SK-N-SH (cell line): ENCODE measurements at regions of chr5 and their contacts with region 1.

Region 1: DNA sequence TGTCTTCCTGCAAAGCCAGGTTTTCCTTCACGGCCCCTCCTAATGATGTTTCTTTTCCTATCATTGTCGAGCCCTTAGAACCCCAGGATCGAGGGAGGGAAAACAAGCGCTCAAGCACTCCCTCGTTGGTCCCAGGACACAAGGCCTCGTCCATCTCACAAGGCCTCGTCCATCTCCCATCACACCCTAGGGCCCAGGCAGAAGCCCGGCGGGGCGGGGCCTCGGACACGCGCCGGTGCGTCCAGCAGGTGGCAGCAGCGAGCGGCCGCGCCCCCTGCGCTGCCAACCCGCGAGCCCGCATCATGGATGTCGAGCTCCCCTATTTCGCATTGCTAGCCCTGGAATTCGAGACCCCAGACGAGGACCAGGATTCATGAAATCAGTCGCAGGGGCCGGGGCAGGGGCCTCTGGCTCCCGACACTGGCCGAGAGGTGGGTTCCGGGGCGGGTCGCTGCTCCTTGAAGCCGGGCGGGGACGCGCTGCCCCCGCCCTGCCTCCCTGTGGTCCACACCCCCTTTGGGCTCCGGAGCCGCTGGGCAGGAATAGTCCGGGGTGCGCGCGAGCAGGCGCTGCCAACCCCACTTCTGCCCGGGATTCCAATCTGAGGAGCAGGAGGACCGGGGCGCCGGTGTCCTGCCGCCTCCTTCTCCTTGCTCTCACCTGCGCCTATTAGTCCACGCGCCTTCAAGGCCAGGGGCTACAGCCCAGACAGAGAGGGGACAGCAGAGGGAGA is at the start of gene ABLIM3:
- DNase-seq: peak; percentile 94
- H3K4me3 ChIP-seq: peak within 1 kb of the TSS; percentile 69 to 87
- H3K27ac ChIP-seq: peak within 1 kb of the TSS in 1 of 2 experiments; percentile 40; a peak in 2 of 4 replicates
- H3K4me1 ChIP-seq: peaks cover 2 to 13% of the 10 kb centered on the region in 2 experiments; a peak in 3 of 4 replicates
- H3K27me3 ChIP-seq: no peaks in the 10 kb centered on the region
- CTCF ChIP-seq: peak; percentile 85
- EP300 ChIP-seq: no peak
- RAD21 ChIP-seq: peak; percentile 55
- polyA plus RNA-seq, gene ABLIM3: 5.2 and 5.9 TPM in 2 replicates

Region 2: DNA sequence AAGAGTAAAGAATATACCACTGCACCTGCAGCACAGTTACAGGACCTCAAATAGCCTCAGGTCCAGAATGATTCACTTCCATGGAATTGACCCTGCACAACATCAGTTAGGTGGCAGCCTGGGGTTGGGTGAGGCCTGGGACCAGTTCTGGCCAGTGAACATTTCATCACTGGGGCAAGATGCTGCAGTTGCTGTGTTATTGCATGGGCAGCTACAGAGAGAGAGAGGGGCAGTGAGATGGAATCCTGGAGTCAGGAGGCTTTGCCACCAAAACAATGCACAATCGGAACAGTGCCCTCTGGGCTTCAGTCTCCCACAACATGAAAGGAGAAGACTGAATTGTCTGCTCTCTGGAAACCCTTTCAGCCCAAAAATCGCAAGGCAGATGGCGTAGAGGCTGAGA is 130.3 kb before region 1 on chr5:
- CTCF ChIA-PET with region 1: no interaction called
- POLR2A ChIA-PET with region 1: no interaction called
- DNase-seq: no peak
- H3K4me3 ChIP-seq: no peak overlapping the region
- H3K27ac ChIP-seq: no peak overlapping the region
- H3K4me1 ChIP-seq: peaks cover 0 to 2% of the 10 kb centered on the region in 2 experiments; a peak in 2 of 4 replicates
- H3K27me3 ChIP-seq: no peaks in the 10 kb centered on the region
- CTCF ChIP-seq: no peak
- EP300 ChIP-seq: no peak
- RAD21 ChIP-seq: no peak

Region 3: DNA sequence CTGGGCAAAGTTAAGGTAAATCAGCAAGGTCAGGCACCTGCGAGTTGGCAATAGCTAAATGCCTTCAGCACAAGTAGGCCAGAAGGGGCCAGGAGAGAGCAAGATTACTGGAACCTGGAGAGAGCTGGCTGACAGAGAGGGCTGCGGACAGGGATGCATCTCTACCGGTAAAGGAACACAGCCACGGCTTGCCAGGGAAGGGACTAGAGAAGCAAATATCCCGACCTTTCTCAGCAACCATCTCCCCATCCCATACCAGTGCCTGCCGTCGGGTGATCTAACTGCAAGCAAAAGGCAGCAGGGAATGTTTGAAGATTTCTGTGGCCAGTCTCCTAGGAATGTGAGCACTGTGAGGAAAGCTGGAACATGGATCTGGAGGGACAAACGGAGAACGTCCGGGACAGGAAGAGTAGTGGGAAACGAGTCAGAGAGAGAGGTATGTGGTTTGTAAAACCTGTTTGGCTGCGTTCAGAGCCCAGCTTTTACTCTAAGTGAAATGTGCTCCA is 16.0 kb before region 1 on chr5:
- CTCF ChIA-PET with region 1: interaction called, 26 read pairs
- POLR2A ChIA-PET with region 1: no interaction called
- DNase-seq: no peak
- H3K4me3 ChIP-seq: no peak overlapping the region
- H3K27ac ChIP-seq: no peak overlapping the region
- H3K4me1 ChIP-seq: no peaks in the 10 kb centered on the region
- H3K27me3 ChIP-seq: no peaks in the 10 kb centered on the region
- CTCF ChIP-seq: peak; percentile 36; the same call in 1 of the 2 replicates
- EP300 ChIP-seq: no peak
- RAD21 ChIP-seq: no peak

Region 4: DNA sequence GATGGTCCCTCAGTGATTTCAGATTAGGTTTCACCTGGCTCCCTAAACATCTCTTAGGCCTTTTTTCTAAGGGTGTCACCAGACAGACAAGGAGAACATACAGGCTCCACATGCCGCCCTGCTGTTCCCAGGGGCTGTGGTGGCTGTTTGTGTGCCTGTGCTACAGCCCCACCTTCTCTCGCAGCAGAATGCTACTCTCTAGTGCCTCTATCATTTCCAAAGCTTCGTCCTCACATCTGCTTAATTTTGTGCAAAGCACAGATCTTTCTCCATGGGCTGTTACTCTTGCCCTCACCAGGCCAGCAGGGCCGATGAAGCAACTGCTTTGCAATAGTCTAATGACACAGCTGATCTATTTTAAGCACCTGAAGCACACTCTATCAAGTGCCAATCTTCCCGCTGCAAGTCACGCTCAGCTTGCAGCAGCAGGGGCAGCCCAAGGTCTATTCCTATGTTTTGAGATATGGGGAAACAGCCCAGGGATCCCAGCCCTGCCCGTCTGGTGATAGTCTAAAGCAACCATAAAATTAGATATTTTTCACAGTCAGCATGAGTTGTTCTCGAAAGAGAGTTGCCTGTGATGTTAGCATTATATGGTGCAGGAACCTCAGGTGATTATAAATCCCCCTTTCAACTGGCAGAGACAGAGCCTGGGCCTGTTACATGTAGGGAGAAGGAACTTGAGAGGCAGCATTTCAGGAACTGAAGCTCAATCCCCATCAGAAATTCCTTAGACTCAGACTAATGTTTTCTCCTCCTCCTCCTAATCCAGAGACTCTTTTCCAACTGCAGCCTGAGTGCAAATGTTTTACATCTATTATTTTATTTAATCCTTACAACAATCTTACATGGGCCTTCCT is 12.6 kb after region 1 on chr5:
- CTCF ChIA-PET with region 1: interaction called, 17 read pairs
- POLR2A ChIA-PET with region 1: no interaction called
- DNase-seq: no peak
- H3K4me3 ChIP-seq: no peak overlapping the region
- H3K27ac ChIP-seq: no peak overlapping the region
- H3K4me1 ChIP-seq: peaks cover 0 to 17% of the 10 kb centered on the region in 2 experiments
- H3K27me3 ChIP-seq: no peaks in the 10 kb centered on the region
- CTCF ChIP-seq: no peak
- EP300 ChIP-seq: no peak
- RAD21 ChIP-seq: no peak

Region 5: DNA sequence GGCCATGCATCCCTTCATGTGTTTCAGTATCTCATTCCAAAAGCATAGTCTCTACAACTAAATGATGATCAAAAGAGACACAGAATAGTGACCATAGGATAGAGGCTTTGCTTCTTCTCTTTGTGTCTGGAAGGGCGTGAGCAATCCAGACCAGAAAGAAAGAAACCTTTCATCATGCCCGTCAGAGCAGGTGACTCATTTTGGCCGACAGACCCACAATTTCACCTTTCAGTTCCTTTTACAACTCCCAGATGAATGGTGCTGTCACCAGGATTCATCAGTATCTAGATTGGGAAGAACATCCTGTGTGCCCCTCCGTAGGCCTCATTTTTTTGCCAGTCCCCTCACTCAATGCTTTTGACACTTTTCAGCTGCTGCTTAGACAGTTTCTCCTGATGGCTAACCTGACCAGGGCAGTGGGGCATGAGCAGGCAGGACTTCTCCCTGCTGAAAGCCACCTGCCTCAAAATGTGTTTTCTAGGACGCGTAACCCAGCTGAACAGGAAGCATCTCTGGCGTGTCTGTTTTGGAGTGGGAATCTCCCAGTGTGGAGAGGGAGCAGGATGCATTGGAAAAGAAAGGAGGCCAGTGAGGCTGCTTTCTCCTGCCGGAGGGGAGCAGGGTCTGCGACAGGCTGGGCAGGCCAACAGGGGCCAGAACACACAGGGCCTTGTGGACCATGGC is 21.2 kb after region 1 on chr5:
- CTCF ChIA-PET with region 1: interaction called, 18 read pairs
- POLR2A ChIA-PET with region 1: no interaction called
- DNase-seq: no peak
- H3K4me3 ChIP-seq: no peak overlapping the region
- H3K27ac ChIP-seq: peak overlapping the region in 1 of 2 experiments; percentile 22; a peak in 1 of 4 replicates
- H3K4me1 ChIP-seq: no peaks in the 10 kb centered on the region; a peak in 1 of 4 replicates
- H3K27me3 ChIP-seq: no peaks in the 10 kb centered on the region
- CTCF ChIP-seq: no peak
- EP300 ChIP-seq: no peak
- RAD21 ChIP-seq: no peak

Region 6: DNA sequence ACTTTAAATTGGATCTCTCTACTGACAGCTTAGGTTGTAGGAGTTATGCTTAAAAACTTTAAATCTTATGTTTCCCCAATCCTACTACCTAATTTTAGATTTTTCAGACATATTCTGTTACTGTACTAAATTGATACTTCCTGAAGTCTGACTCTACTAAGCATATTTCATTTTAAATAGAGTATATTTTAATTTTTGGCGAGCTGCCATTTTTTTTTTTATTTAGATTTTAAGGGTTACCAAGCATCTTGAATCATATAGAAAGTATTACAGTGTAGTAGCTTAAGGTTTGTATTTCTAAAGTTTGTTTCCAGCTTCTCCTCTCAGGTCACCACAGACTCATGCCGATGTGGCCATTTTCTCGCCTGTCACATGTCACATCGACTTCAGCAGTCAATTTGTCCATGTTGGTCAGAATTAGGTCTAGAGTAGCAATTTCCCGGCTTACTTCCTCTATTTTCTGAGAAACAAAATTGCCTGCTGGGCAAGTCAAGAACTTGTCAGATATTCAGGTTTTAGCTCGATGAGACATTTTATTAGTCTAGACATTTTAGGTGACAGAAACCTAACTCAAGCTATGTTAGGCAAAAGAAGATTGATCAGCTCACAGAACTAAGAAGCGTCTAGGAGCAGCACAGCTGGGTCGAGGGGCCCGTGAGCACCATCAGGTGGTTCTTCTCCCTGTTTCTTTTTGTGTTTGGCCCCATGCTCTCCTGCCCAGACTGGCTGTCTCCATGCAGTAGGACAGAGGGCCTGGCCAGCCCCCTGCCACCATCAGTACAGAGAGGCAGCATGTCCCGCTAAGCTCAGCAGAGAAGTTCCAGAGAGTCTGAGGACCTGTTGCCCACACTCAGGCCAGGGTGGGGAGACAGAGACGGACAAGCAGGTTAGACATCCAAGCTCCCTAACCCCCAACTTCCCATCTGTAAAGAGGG is 81.8 kb after region 1 on chr5:
- CTCF ChIA-PET with region 1: interaction called, 14 read pairs
- POLR2A ChIA-PET with region 1: no interaction called
- DNase-seq: no peak
- H3K4me3 ChIP-seq: no peak overlapping the region
- H3K27ac ChIP-seq: no peak overlapping the region
- H3K4me1 ChIP-seq: peaks cover 0 to 8% of the 10 kb centered on the region in 2 experiments; a peak in 1 of 4 replicates
- H3K27me3 ChIP-seq: no peaks in the 10 kb centered on the region
- CTCF ChIP-seq: no peak
- EP300 ChIP-seq: no peak
- RAD21 ChIP-seq: no peak

Region 7: GRCh38 chr5:149228618-149229297 is 87.4 kb after region 1 on chr5:
- CTCF ChIA-PET with region 1: interaction called, 14 read pairs
- POLR2A ChIA-PET with region 1: no interaction called
- DNase-seq: peak; percentile 34
- H3K4me3 ChIP-seq: no peak overlapping the region; a peak in 1 of 4 replicates
- H3K27ac ChIP-seq: 0 out of 4 replicates have a peak overlapping the region, but pooled peaks of 1 of the 2 experiments have one; percentile 2
- H3K4me1 ChIP-seq: peaks cover 0 to 8% of the 10 kb centered on the region in 2 experiments; a peak in 1 of 4 replicates
- H3K27me3 ChIP-seq: no peaks in the 10 kb centered on the region
- CTCF ChIP-seq: peak; percentile 86
- EP300 ChIP-seq: no peak
- RAD21 ChIP-seq: peak; percentile 75

Region 8: GRCh38 chr5:149268928-149269557 is 127.7 kb after region 1 on chr5:
- CTCF ChIA-PET with region 1: interaction called, 25 read pairs
- POLR2A ChIA-PET with region 1: no interaction called
- DNase-seq: peak; percentile 73
- H3K4me3 ChIP-seq: peak overlapping the region in 1 of 2 experiments; percentile 22; a peak in 1 of 4 replicates
- H3K27ac ChIP-seq: no peak overlapping the region
- H3K4me1 ChIP-seq: peaks cover 0 to 4% of the 10 kb centered on the region in 2 experiments; a peak in 1 of 4 replicates
- H3K27me3 ChIP-seq: no peaks in the 10 kb centered on the region
- CTCF ChIP-seq: peak; percentile 83
- EP300 ChIP-seq: no peak
- RAD21 ChIP-seq: peak; percentile 67

Region 9: DNA sequence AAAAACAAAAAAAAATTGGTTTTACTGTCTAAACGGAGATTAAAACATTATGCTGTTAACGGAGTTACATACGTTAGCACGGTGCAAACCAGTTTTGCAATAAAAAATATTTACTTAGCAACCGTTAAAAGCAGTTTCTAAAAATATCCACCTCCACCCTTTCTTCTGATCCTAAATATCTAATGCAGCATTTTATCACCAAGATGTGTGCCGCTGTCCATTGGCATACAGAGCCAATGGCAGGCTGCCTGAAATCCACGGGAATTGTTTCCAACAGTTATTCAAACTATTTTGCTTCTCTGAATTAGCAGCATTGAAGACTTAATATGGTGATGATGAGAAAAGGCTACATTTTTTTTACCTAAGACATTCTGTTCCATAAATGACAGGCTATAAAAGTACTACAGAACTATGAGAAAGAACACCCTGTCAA is 348.2 kb after region 1 on chr5:
- CTCF ChIA-PET with region 1: no interaction called
- POLR2A ChIA-PET with region 1: no interaction called
- DNase-seq: no peak
- H3K4me3 ChIP-seq: no peak overlapping the region
- H3K27ac ChIP-seq: peak overlapping the region; percentile 17 to 99; a peak in 3 of 4 replicates
- H3K4me1 ChIP-seq: peaks cover 16 to 43% of the 10 kb centered on the region in 2 experiments
- H3K27me3 ChIP-seq: no peaks in the 10 kb centered on the region
- CTCF ChIP-seq: no peak
- EP300 ChIP-seq: no peak
- RAD21 ChIP-seq: no peak